ENCODE measurements at regions of chr3 and their contacts with region 1.

Region 1: GRCh38 chr3:64023187-64023848 is at the start of gene PSMD6:
- DNase-seq: peak; percentile 91
- CTCF ChIP-seq: peak; percentile 100

Region 2: GRCh38 chr3:63993653-63994079 is 29.7 kb before region 1 on chr3:
- CTCF ChIA-PET with region 1: interaction called, 14 read pairs
- POLR2A ChIA-PET with region 1: no interaction called
- DNase-seq: peak; percentile 70
- CTCF ChIP-seq: peak; percentile 89

Region 3: DNA sequence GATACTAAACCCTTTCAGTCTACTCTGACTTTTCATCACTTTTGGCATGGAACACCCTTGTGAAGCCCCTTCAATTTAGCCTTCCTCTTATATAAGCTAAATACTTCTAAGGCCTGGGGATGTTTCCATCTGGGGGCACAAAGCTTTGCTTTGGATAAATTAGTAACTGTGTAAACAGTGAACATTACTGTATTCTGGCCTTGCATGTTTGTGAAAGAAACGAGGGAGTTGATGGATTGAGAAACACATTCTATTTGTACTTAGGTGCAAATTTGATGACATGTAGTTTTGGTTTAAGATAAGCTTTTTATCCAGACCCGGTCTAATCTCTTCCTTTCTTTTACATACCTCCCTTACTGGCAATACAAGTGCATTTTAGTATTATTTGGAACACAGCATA is 19.7 kb before region 1 on chr3:
- CTCF ChIA-PET with region 1: interaction called, 37 read pairs
- POLR2A ChIA-PET with region 1: no interaction called
- DNase-seq: no peak
- CTCF ChIP-seq: no peak

Region 4: GRCh38 chr3:64011685-64012084 is 11.6 kb before region 1 on chr3:
- CTCF ChIA-PET with region 1: interaction called, 37 read pairs
- POLR2A ChIA-PET with region 1: no interaction called
- DNase-seq: no peak
- CTCF ChIP-seq: no peak

Region 5: GRCh38 chr3:64039981-64040733 is 16.8 kb after region 1 on chr3:
- CTCF ChIA-PET with region 1: interaction called, 13 read pairs
- POLR2A ChIA-PET with region 1: no interaction called
- DNase-seq: no peak
- CTCF ChIP-seq: no peak

Region 6: DNA sequence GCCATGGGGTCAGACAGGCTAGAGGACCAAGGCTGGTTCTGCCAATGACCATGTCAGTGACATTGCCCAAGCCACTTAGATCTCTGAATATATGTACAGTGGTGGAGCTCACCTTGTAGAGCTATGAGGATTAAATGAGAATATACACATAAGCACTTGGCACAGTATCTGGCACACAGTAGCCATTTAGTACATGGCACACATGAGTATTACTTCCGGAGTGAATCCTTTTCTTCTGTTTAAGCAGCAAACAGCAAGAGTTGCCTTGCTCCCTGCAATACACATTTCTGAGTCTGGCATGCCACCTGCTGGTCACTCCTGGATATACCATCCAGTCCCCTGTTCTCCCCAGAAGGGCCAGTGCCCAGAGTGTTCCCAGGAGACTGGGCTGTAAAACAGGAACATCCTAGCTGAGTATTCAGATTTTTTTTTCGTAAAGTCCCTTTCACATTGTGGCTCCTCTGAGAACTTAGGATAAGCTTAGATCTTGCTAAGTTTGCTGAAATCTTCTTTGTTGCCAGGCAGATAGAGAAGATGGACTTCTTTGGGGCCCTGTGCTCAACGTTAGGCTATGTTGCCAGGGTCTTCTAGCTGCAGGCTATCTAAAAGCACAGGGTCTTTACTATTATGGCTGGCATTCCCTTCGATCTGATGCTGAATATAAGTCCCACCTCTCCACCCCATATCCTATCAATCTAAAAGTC is 461.1 kb after region 1 on chr3:
- CTCF ChIA-PET with region 1: interaction called, 127 read pairs
- POLR2A ChIA-PET with region 1: no interaction called
- DNase-seq: peak; percentile 69
- CTCF ChIP-seq: peak; percentile 83

Measured in GM10248 (cell line).